Mucosa of descending colon (tissue), 3 donors: ENCODE measurements at regions of chr16 and their contacts with region 1.

Region 1: GRCh38 chr16:10981697-10982216 is 37.4 kb downstream of the CLEC16A start:
- DNase-seq: no peak
- ATAC-seq: peak; percentile 72
- H3K4me3 ChIP-seq: no peak overlapping the region
- H3K4me1 ChIP-seq: peaks cover 2% of the 10 kb centered on the region
- CTCF ChIP-seq: no peak

Region 2: GRCh38 chr16:10835281-10835931 is 146.4 kb before region 1 on chr16:
- intact Hi-C with region 1: no loop called
- DNase-seq: no peak
- ATAC-seq: no peak
- H3K4me3 ChIP-seq: no peak overlapping the region
- H3K4me1 ChIP-seq: no peaks in the 10 kb centered on the region
- CTCF ChIP-seq: no peak

Region 3: DNA sequence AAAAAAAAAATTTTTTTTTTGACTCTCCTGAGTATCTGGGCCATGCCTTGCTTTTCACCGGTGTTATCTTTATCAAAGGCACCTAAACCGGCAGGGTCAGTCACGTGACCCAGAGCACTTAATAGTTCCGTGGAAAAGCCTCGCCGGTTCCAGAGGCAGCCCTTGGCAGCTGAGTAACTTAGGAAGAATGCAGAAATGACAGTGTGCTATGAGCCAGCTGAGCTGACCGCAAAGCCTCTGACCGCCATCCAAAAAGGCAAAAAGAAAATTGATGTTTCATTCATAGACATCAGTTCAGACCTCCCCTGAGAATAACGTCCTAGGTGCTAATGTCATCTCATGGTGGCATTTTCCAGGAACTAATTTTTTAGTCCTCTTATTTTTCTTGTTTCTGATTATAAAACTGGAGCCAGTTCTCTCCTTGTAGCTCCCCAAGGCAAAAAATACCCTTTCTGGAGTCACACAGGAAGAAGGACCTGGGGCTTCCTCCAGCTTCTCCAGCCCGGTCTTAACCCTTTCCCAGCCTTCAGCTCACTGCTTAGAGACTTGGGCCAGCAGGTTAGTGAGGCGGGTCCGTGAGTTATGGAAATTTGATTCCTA is 151.7 kb after region 1 on chr16:
- intact Hi-C with region 1: loop called in 1 of 2 experiments (anchors 10 kb)
- DNase-seq: peak in 1 of 3 donors; percentile 54
- ATAC-seq: peak; percentile 39
- H3K4me3 ChIP-seq: no peak overlapping the region
- H3K4me1 ChIP-seq: no peaks in the 10 kb centered on the region
- CTCF ChIP-seq: no peak

Region 4: GRCh38 chr16:11175787-11176341 is 194.1 kb after region 1 on chr16:
- intact Hi-C with region 1: no loop called
- DNase-seq: no peak
- ATAC-seq: no peak
- H3K4me3 ChIP-seq: no peak overlapping the region
- H3K4me1 ChIP-seq: no peaks in the 10 kb centered on the region
- CTCF ChIP-seq: no peak